Cardiac septum (tissue), 1 donor: ENCODE measurements at regions of chr9 and their contacts with region 1.

Region 1: GRCh38 chr9:133792721-133793470 is 54.7 kb upstream of the SARDH start:
- DNase-seq: peak; percentile 89

Region 2: GRCh38 chr9:133862585-133863256 is 69.8 kb after region 1 on chr9:
- intact Hi-C with region 1: no loop called
- DNase-seq: no peak

Region 3: GRCh38 chr9:133992780-133993634 is 200.1 kb after region 1 on chr9:
- intact Hi-C with region 1: loop called (anchors 1 kb)
- DNase-seq: no peak

Region 4: DNA sequence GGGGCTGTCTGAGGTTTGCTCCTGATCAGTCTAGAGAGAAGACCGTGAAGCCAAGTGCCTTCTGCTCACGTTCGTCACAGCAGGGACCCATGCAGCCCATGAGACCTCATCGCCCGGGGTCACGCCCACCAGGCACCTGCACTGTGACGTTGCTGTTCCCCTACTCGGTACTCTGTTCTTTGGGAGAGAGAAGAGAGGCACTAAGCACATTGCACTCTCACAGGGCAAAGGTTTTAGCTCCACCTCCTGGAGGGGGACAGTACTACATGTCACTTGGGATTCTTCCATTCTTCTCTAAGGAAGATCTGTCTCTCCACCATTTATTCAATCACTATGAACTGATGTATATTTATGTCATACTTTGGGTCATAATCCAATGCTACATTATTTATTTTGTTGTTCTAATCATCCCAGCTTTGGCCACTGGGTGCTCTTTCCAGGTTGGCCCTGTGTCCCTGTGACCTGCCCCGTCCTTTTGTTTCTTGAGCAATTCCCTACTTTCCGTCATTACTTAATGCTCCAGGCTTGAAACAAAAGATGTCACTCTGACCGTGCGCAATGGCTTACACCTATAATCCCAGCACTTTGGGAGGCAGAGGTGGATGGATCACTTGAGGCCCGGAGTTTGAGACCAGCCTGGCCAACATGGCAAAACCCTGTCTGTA is 306.4 kb after region 1 on chr9:
- intact Hi-C with region 1: loop called (anchors 5 kb)
- DNase-seq: no peak